ENCODE measurements at regions of chr11 and their contacts with region 1.

Region 1: GRCh38 chr11:84316866-84317555 is 1030.8 kb upstream of the CCDC90B start:
- DNase-seq: peak; percentile 40 to 94 (median 66)

Region 2: GRCh38 chr11:84270466-84270865 is 46.5 kb before region 1 on chr11:
- intact Hi-C with region 1: loop called (anchors 5 kb)
- DNase-seq: no peak

Region 3: DNA sequence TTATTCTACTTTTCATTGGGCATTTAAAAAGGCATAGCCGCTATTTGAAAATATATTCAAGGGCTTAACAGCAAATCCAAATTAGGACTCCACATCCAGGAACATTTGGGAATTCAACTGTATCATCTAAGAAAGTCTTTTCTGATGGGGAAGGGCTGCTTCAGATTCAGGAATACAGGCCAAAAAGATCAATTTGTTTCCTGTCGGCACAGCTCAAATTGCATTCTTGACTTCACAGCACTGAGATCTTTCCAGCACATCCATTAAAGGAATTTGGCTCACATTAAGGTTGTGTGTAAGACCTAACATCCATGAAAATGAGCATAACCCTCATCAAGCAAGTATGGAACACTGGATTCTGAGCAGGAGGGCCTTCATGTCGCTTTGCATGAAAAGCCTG is 138.7 kb after region 1 on chr11:
- intact Hi-C with region 1: no loop called
- DNase-seq: no peak

Region 4: DNA sequence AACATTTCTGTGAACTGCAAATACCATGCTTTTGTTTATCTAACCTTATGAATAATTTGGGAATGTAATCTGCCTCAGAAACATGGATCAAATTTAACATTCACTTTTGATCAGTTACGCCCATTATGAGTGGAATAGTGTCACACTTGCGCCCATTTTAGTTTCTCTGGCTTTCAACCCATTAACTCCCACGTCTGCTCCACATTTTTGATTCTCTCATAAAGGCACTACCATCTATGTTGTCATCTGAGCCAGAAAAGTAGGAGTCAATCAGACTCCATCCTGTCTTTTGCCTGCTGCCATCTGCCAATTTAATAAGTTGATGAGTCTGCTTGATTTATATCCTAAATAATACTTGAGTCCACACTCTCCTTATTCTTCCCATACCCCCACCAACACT is 219.4 kb after region 1 on chr11:
- intact Hi-C with region 1: no loop called
- DNase-seq: no peak

Measured in posterior cingulate gyrus (tissue), 11 donors.